ENCODE measurements at regions of chr11 and their contacts with region 1.

Region 1: GRCh38 chr11:18115360-18116127 is 9.7 kb upstream of the SAAL1 start:
- DNase-seq: peak; percentile 23
- H3K4me3 ChIP-seq: no peak overlapping the region
- H3K27ac ChIP-seq: no peak overlapping the region
- H3K27me3 ChIP-seq: peaks cover 22% of the 10 kb centered on the region
- CTCF ChIP-seq: peak; percentile 91

Region 2: DNA sequence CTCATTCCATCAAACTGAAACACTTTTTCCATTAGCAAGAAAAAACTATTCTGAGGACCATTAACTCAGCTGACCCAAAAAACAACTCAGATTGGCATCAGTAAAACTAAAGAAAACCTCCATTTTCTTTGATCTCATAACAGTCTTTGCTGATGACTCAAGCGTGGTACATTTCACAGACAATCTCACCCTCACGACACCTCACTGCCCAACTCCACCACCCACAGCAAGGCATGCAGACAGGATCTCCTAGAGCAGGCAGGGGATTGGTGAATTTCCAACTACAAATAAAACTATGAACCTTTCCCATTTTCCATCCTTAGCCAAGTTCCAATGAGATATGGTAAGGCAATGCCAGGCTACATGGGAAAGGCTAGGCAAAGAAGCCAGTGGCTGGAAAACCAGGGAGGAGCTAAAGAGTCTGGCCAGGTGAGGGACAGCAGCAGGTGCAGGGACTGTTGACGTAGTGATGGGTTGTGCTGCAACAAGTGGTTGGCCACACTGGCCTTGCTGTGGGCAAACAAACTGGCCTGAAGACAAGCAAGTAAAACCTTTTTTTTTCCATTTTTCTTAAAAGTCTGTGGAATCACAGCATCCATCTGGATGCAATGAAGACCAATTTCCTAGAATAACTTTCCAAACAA is 199.9 kb before region 1 on chr11:
- CTCF ChIA-PET with region 1: no interaction called
- POLR2A ChIA-PET with region 1: no interaction called
- DNase-seq: no peak
- H3K4me3 ChIP-seq: no peak overlapping the region
- H3K27ac ChIP-seq: no peak overlapping the region
- H3K27me3 ChIP-seq: no peaks in the 10 kb centered on the region
- CTCF ChIP-seq: no peak

Region 3: GRCh38 chr11:17986007-17986710 is 129.4 kb before region 1 on chr11:
- CTCF ChIA-PET with region 1: interaction called, 20 read pairs
- POLR2A ChIA-PET with region 1: no interaction called
- DNase-seq: peak; percentile 63
- H3K4me3 ChIP-seq: no peak overlapping the region
- H3K27ac ChIP-seq: peak overlapping the region; percentile 48
- H3K27me3 ChIP-seq: no peaks in the 10 kb centered on the region
- CTCF ChIP-seq: no peak

Region 4: GRCh38 chr11:17991783-17992433 is 123.6 kb before region 1 on chr11:
- CTCF ChIA-PET with region 1: interaction called, 20 read pairs
- POLR2A ChIA-PET with region 1: no interaction called
- DNase-seq: peak; percentile 36
- H3K4me3 ChIP-seq: no peak overlapping the region
- H3K27ac ChIP-seq: no peak overlapping the region
- H3K27me3 ChIP-seq: no peaks in the 10 kb centered on the region
- CTCF ChIP-seq: peak; percentile 92

Region 5: DNA sequence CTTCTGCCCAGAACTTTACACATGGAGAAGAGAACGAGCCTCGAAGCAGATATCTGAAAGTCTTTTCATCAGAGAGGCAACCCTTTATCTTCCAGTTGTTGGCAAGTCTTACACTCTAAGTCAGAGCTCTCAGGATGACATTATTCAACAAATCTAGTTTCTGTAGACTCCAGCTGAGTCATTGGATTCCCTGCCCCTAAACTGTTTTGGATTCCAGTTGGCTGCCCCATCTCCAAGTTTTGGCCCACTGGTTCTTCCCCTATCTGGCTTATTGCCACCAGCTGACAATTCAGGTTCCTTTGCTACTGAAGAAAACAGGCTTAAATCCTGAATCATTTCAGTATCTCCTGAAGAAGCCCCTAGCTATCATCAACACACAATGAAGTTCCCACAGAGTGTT is 23.8 kb before region 1 on chr11:
- CTCF ChIA-PET with region 1: interaction called, 10 read pairs
- POLR2A ChIA-PET with region 1: no interaction called
- DNase-seq: no peak
- H3K4me3 ChIP-seq: no peak overlapping the region
- H3K27ac ChIP-seq: no peak overlapping the region
- H3K27me3 ChIP-seq: no peaks in the 10 kb centered on the region
- CTCF ChIP-seq: no peak

Region 6: GRCh38 chr11:18188796-18189195 is 73.3 kb after region 1 on chr11:
- CTCF ChIA-PET with region 1: interaction called, 10 read pairs
- POLR2A ChIA-PET with region 1: no interaction called
- DNase-seq: no peak
- H3K4me3 ChIP-seq: no peak overlapping the region
- H3K27ac ChIP-seq: no peak overlapping the region
- H3K27me3 ChIP-seq: peaks cover 4% of the 10 kb centered on the region
- CTCF ChIP-seq: no peak

Region 7: GRCh38 chr11:18203723-18204122 is 88.2 kb after region 1 on chr11:
- CTCF ChIA-PET with region 1: interaction called, 32 read pairs
- POLR2A ChIA-PET with region 1: no interaction called
- DNase-seq: no peak
- H3K4me3 ChIP-seq: no peak overlapping the region
- H3K27ac ChIP-seq: no peak overlapping the region
- H3K27me3 ChIP-seq: peaks cover 1% of the 10 kb centered on the region
- CTCF ChIP-seq: peak; percentile 58

Measured in AG04450 (cell line).